ENCODE measurements at regions of chr16 and their contacts with region 1.

Region 1: DNA sequence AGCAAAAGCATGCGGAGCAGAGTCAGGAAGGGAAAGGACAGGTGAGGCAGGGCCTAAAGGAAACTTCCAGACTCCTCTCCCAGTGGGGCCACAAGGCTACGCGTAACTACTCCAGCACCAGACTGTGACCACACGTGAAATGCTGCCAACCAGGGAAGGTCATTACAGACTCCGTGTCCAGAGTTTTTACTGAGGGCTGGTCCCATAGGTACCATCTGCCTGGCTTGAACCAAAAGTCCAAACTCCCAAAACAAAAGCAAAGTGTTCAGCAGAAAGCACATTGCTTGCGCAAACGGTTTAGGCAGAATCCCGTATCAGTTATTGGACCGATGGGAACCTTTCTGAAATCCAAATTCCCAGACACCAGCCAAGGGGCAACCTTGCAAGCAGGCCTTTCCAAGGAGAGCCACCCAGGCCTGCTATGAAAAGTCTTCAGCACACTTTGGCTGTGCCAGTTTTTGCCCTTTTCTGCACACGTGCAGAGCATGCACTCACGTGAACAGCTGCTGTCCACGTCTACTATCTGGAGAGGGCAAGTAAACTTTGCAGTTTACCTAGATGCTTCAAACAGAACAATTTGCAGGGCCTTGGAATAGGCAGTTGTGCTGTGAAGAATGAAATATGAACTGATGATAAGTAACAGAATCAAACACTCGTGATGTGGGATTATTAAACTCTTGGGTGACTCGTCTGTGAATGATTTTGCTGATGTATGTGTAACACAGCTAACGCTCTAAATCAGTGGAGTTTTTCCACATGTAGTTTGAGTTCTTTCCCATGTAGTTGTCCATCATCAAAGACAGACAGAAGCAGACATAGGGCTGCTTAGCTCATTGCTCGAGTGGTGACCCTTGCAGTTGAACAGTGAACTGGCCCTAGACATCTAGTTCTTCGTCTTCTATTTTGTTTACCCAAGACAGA is 58.1 kb upstream of the CRISPLD2 start:
- DNase-seq: no peak
- ATAC-seq: no peak
- H3K4me3 ChIP-seq: no peak overlapping the region
- H3K27ac ChIP-seq: no peak overlapping the region
- H3K4me1 ChIP-seq: no peaks in the 10 kb centered on the region
- H3K27me3 ChIP-seq: no peaks in the 10 kb centered on the region
- CTCF ChIP-seq: no peak
- POLR2A ChIP-seq: no peak

Region 2: GRCh38 chr16:84851192-84852127 is 89.8 kb after region 1 on chr16:
- intact Hi-C with region 1: no loop called
- DNase-seq: peak in 1 of 4 donors; percentile 39
- ATAC-seq: peak; percentile 20
- H3K4me3 ChIP-seq: no peak overlapping the region
- H3K27ac ChIP-seq: no peak overlapping the region
- H3K4me1 ChIP-seq: no peaks in the 10 kb centered on the region
- H3K27me3 ChIP-seq: no peaks in the 10 kb centered on the region
- CTCF ChIP-seq: no peak
- POLR2A ChIP-seq: no peak

Region 3: GRCh38 chr16:84959784-84960417 is 198.2 kb after region 1 on chr16:
- intact Hi-C with region 1: loop called (anchors 5 kb)
- DNase-seq: no peak
- ATAC-seq: no peak
- H3K4me3 ChIP-seq: no peak overlapping the region
- H3K27ac ChIP-seq: no peak overlapping the region
- H3K4me1 ChIP-seq: peaks cover 11% of the 10 kb centered on the region
- H3K27me3 ChIP-seq: no peaks in the 10 kb centered on the region
- CTCF ChIP-seq: no peak
- POLR2A ChIP-seq: no peak